Activated CD4-positive, alpha-beta T cell treated with anti-CD3 and anti-CD28 coated beads for 36 hours (primary cell): ENCODE measurements at regions of chr7 and their contacts with region 1.

Region 1: GRCh38 chr7:55572378-55573233 is at the start of gene VOPP1:
- DNase-seq: peak; percentile 78
- ATAC-seq: peak; percentile 31
- H3K4me3 Mint-ChIP-seq: peak within 1 kb of the TSS; percentile 89
- H3K27ac Mint-ChIP-seq: peak within 1 kb of the TSS; percentile 94
- H3K4me1 Mint-ChIP-seq: peaks cover 67% of the 10 kb centered on the region
- H3K27me3 Mint-ChIP-seq: no peaks in the 10 kb centered on the region
- total RNA-seq, gene VOPP1: 63.7 to 64.2 TPM

Region 2: DNA sequence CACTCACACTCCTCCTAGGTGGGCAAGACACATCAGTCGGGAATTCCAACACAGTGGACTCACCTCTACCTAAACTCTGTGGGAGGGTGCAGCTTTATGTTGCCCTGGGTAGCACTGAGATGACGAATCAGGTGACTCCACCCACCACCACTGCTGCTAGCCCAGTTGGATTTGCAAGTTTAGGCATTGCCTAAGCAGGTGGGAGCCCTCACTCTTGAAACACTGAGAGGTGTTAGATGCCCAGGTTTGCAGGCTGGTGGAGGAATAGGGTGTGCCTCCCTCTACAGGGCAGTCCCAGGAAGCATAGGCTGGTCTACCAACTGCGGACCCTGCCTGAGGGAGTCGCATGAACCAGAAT is 1828.2 kb before region 1 on chr7:
- CTCF ChIA-PET with region 1: no interaction called
- POLR2A ChIA-PET with region 1: no interaction called
- intact Hi-C with region 1: no loop called
- DNase-seq: no peak
- ATAC-seq: no peak
- H3K4me3 Mint-ChIP-seq: no peak overlapping the region
- H3K27ac Mint-ChIP-seq: no peak overlapping the region
- H3K4me1 Mint-ChIP-seq: no peaks in the 10 kb centered on the region
- H3K27me3 Mint-ChIP-seq: no peaks in the 10 kb centered on the region

Region 3: DNA sequence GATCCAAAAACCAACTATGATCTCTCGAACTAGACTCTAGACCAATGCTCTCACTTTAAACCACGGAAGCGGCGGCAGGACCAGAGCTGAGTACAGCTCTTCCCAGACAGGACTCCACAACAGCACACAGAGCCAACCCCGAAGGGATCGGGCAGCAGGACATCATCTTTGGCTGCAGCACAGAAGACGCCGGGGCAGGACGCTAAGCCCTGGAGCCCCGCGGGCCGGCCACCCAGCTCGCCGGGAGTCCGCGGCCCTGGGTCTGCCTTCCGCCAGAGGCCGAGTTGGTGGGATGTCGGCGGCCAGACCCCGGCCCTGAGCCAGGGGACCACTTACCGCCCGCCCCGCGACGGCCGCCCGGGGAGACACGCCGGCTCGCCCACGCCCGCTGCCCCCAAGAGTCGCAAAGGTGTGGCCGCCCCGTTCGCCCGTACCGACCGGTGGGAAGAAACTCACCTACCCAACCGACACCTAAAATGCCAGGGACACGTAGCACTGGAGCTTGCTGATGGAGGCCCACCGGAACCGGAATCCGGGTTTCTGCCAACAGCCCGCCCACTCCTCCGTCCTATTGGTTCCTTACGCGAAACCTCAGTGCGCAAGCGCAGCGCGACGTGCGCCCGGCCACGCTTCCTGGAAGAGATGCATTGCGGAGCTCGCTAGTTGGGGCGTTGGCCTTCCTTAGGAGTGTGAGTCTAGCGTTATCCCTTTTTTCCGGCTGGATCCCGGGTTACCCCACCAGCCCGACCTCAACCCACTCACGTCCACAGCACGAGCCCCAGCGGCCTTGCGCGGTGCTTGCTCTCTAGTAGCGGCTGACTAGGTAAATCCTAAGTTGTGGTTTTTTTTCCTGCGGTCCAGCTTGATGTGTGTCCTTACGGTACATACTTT is 813.7 kb before region 1 on chr7 and contains the start of gene SEC61G:
- CTCF ChIA-PET with region 1: no interaction called
- POLR2A ChIA-PET with region 1: no interaction called
- intact Hi-C with region 1: loop called in 1 of 2 experiments (anchors 5 kb)
- DNase-seq: peak; percentile 97
- ATAC-seq: peak; percentile 91
- H3K4me3 Mint-ChIP-seq: peak within 1 kb of the TSS; percentile 91
- H3K27ac Mint-ChIP-seq: peak within 1 kb of the TSS; percentile 95
- H3K4me1 Mint-ChIP-seq: peaks cover 20% of the 10 kb centered on the region
- H3K27me3 Mint-ChIP-seq: peaks cover 2% of the 10 kb centered on the region
- total RNA-seq, gene SEC61G: 78.4 to 191 TPM

Region 4: DNA sequence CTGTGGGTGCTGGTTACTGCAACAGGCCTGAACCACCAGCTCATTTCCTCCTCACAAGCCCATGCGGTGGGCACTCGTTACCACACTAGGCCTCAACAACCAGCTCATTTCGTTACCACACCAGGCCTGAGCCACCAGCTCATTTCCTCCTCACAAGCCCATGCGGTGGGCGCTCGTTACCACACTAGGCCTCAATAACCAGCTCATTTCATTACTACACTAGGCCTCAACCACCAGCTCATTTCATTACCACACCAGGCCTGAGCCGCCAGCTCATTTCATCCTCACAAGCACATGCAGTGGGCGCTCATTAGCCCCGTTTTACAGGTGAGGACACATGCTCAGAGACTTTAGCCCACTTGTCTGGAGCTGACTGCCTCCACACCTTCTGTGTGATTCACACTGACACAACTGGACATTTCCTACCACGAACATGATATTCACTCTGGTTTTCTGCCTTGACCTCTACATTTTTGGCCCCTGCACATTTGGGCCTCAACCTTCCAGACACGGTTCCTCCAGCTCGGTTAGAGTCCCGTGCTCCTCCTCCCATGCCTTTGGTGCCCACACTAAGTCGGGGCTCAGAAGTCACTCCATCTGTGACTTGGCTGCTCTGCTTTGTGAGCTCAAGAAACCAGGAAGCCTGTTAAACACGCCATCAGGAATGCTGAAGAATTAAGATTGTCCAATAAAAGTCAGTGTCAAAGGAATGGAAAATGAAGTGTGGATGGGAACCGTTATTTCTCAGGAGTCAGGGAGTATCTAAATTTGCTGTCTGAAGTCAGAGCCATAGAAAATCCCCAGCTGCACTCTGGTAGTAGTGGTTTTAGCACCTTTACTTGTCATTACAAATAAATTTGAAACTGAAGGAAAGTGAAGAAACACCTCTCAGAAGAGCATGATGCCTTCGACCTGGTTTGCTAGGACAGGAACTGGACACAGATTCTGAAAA is 263.3 kb before region 1 on chr7:
- CTCF ChIA-PET with region 1: no interaction called
- POLR2A ChIA-PET with region 1: interaction called, 4 read pairs
- intact Hi-C with region 1: loop called in 1 of 2 experiments (anchors 1 kb)
- DNase-seq: peak; percentile 91
- ATAC-seq: peak; percentile 88
- H3K4me3 Mint-ChIP-seq: no peak overlapping the region
- H3K27ac Mint-ChIP-seq: peak overlapping the region; percentile 84
- H3K4me1 Mint-ChIP-seq: peaks cover 22% of the 10 kb centered on the region
- H3K27me3 Mint-ChIP-seq: peaks cover 12% of the 10 kb centered on the region

Region 5: GRCh38 chr7:55432939-55433784 is 139.4 kb before region 1 on chr7:
- CTCF ChIA-PET with region 1: no interaction called
- POLR2A ChIA-PET with region 1: no interaction called
- intact Hi-C with region 1: loop called in 1 of 2 experiments (anchors 2 kb)
- DNase-seq: peak; percentile 45
- ATAC-seq: peak; percentile 79
- H3K4me3 Mint-ChIP-seq: no peak overlapping the region
- H3K27ac Mint-ChIP-seq: peak overlapping the region; percentile 43
- H3K4me1 Mint-ChIP-seq: peaks cover 33% of the 10 kb centered on the region
- H3K27me3 Mint-ChIP-seq: no peaks in the 10 kb centered on the region

Region 6: GRCh38 chr7:55509322-55509721 is 63.3 kb before region 1 on chr7:
- CTCF ChIA-PET with region 1: interaction called, 5 read pairs
- POLR2A ChIA-PET with region 1: interaction called, 6 read pairs
- intact Hi-C with region 1: loop called (anchors 1 to 2 kb)
- DNase-seq: no peak
- ATAC-seq: no peak
- H3K4me3 Mint-ChIP-seq: no peak overlapping the region
- H3K27ac Mint-ChIP-seq: peak overlapping the region; percentile 40
- H3K4me1 Mint-ChIP-seq: peaks cover 75% of the 10 kb centered on the region
- H3K27me3 Mint-ChIP-seq: no peaks in the 10 kb centered on the region

Region 7: GRCh38 chr7:55557666-55558188 is 14.9 kb before region 1 on chr7:
- CTCF ChIA-PET with region 1: interaction called, 4 read pairs
- POLR2A ChIA-PET with region 1: interaction called, 5 read pairs
- intact Hi-C with region 1: loop called (anchors 1 to 2 kb)
- DNase-seq: peak; percentile 61
- ATAC-seq: peak; percentile 69
- H3K4me3 Mint-ChIP-seq: peak overlapping the region; percentile 22
- H3K27ac Mint-ChIP-seq: peak overlapping the region; percentile 79
- H3K4me1 Mint-ChIP-seq: peaks cover 91% of the 10 kb centered on the region
- H3K27me3 Mint-ChIP-seq: no peaks in the 10 kb centered on the region

Region 8: GRCh38 chr7:55951637-55952351 is 379.2 kb after region 1 on chr7 and contains the start of gene MRPS17:
- CTCF ChIA-PET with region 1: no interaction called
- POLR2A ChIA-PET with region 1: no interaction called
- intact Hi-C with region 1: loop called in 1 of 2 experiments (anchors 5 kb)
- DNase-seq: peak; percentile 96
- ATAC-seq: peak; percentile 100
- H3K4me3 Mint-ChIP-seq: peak within 1 kb of the TSS; percentile 98
- H3K27ac Mint-ChIP-seq: peak within 1 kb of the TSS; percentile 97
- H3K4me1 Mint-ChIP-seq: peaks cover 16% of the 10 kb centered on the region
- H3K27me3 Mint-ChIP-seq: peaks cover 2% of the 10 kb centered on the region
- total RNA-seq, gene MRPS17: 16.6 to 26.8 TPM